A549 (cell line): ENCODE measurements at regions of chr17 and their contacts with region 1.

Region 1: GRCh38 chr17:45293413-45294211 is 23.2 kb downstream of the MAP3K14 start:
- DNase-seq: peak; percentile 93 to 97
- ATAC-seq: peak; percentile 84 to 86
- H3K4me3 ChIP-seq: peak overlapping the region; percentile 8; the same call in 1 of the 3 replicates
- H3K27ac ChIP-seq: peak overlapping the region; percentile 90 to 92
- H3K4me1 ChIP-seq: peaks cover 90% of the 10 kb centered on the region
- CTCF ChIP-seq: peak; percentile 34
- EP300 ChIP-seq: peak; percentile 55 to 57; a peak in 2 of 5 replicates
- POLR2A ChIP-seq: no peak
- RAD21 ChIP-seq: peak; percentile 57 to 60

Region 2: GRCh38 chr17:45247429-45248131 is 46.0 kb before region 1 on chr17:
- CTCF ChIA-PET with region 1: interaction called, 11 read pairs
- POLR2A ChIA-PET with region 1: interaction called, 5 read pairs
- DNase-seq: peak; percentile 99 to 100
- ATAC-seq: peak; percentile 79 to 91
- H3K4me3 ChIP-seq: peak overlapping the region; percentile 89
- H3K27ac ChIP-seq: peak overlapping the region; percentile 93 to 96
- H3K4me1 ChIP-seq: peaks cover 49% of the 10 kb centered on the region
- CTCF ChIP-seq: no peak
- EP300 ChIP-seq: peak; percentile 78 to 91; a peak in 3 of 5 replicates
- POLR2A ChIP-seq: peak; percentile 70
- RAD21 ChIP-seq: no peak; a peak in 1 of 5 replicates

Region 3: DNA sequence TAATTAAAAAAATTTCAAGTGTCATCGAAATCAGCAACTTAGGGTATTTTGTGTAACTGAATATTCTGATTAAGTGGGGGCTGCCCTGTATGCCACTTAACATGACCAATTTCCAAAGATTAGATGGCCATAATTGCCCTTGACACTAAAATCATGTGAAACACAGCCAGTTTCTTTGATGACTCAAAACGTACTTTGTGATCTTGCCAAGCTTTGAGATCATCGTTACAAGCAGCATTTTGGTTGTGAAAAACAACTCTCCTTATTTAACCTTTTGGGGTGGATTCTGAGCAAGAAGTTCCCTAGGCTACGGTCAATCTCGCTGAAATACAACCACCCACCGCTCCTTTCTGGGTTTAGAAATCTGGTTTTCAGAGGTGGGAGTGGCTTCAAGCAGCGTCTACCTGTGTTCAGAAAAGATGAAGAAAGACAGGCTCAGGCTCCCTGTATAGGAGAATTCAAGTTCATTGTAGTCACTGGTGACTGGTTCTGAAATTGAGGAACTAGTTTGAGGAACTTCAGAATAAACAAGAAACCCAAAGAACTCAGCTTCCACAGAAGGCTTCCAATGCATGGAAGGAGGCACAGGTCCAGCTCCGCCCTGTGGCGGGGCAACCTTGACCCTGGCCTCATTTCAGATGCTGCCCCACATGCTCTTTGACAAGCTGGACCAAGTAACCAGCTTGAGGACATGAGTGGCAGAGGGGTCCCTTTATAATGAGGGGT is 13.8 kb after region 1 on chr17:
- CTCF ChIA-PET with region 1: interaction called, 108 read pairs
- POLR2A ChIA-PET with region 1: interaction called, 7 read pairs
- DNase-seq: peak in 1 of 2 experiments; percentile 69
- ATAC-seq: peak; percentile 16 to 28; a peak in 5 of 6 replicates
- H3K4me3 ChIP-seq: peak overlapping the region; percentile 10; the same call in 1 of the 3 replicates
- H3K27ac ChIP-seq: peak overlapping the region; percentile 77 to 92
- H3K4me1 ChIP-seq: peaks cover 92% of the 10 kb centered on the region
- CTCF ChIP-seq: no peak
- EP300 ChIP-seq: no peak
- POLR2A ChIP-seq: no peak
- RAD21 ChIP-seq: no peak

Region 4: GRCh38 chr17:45371414-45372327 is 78.1 kb after region 1 on chr17:
- CTCF ChIA-PET with region 1: interaction called, 47 read pairs
- POLR2A ChIA-PET with region 1: interaction called, 26 read pairs
- DNase-seq: peak; percentile 98
- ATAC-seq: peak; percentile 93 to 95
- H3K4me3 ChIP-seq: no peak overlapping the region; the same call in 2 of the 3 replicates
- H3K27ac ChIP-seq: peak overlapping the region; percentile 95 to 97
- H3K4me1 ChIP-seq: peaks cover 84% of the 10 kb centered on the region
- CTCF ChIP-seq: no peak; the same call in 1 of the 3 replicates
- EP300 ChIP-seq: peak; percentile 97 to 99
- POLR2A ChIP-seq: no peak; the same call in 1 of the 2 replicates
- RAD21 ChIP-seq: peak; percentile 44 to 71; a peak in 4 of 5 replicates